GM12878 (cell line): ENCODE measurements at regions of chr2 and their contacts with region 1.

Region 1: DNA sequence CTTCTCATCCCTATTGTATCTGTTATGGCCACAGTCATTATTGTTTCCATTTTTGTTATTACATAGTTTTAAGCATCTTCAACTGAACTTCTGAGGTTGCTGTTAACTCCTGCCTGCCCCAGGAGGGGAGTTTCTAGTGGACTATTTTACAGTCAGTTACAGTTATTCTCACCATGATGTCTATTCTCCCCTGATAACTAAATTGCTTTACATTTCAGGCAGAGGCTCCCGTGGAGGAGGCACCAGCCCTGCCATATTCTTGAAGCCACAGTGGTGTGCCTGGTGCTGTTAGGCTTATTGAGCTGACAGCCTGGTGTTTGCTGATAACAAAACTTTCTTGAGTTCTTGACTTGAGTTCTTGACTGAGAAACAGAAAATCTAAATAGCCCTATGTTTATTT is 256.4 kb downstream of the TFCP2L1 start:
- DNase-seq: no peak
- ATAC-seq: no peak
- H3K4me3 ChIP-seq: no peak overlapping the region
- H3K27ac ChIP-seq: no peak overlapping the region
- H3K4me1 ChIP-seq: no peaks in the 10 kb centered on the region
- H3K27me3 ChIP-seq: peaks cover 0 to 3% of the 10 kb centered on the region in 2 experiments; a peak in 2 of 4 replicates
- CTCF ChIP-seq: no peak
- EP300 ChIP-seq: no peak
- POLR2A ChIP-seq: no peak
- RAD21 ChIP-seq: no peak

Region 2: DNA sequence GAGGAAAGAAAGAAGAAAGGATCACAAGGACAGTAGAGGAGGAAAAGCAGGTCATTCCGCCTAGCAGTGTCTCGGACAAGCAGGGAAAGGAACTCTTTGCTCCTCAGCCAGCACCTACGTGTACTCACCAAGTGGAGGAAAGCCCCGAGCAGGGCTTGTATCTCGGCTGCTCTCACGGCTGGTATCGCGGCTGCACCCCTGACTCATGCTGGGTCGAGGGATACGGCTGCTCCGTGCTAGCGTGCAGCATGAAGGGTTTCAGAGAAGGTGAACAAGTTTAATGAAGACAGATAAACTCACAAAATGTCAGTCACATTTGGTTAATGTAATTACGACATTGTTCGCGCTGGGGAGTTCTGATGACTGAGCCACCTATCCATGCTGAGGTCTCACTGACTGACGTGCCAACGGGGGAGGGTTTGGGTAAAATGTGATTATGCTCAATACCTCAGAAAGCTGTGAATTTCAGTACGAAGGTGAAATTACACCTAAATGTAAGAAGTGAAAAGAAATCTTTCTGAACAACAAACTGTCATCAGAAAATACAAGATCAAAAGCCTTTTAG is 390.0 kb after region 1 on chr2:
- CTCF ChIA-PET with region 1: no interaction called
- POLR2A ChIA-PET with region 1: no interaction called
- RAD21 ChIA-PET with region 1: no interaction called
- SMC1A ChIA-PET with region 1: no interaction called
- in situ Hi-C with region 1: no loop called
- intact Hi-C with region 1: no loop called
- DNase-seq: no peak
- ATAC-seq: no peak
- H3K4me3 ChIP-seq: no peak overlapping the region
- H3K27ac ChIP-seq: no peak overlapping the region
- H3K4me1 ChIP-seq: no peaks in the 10 kb centered on the region
- H3K27me3 ChIP-seq: no peaks in the 10 kb centered on the region
- CTCF ChIP-seq: no peak
- EP300 ChIP-seq: no peak
- POLR2A ChIP-seq: no peak
- RAD21 ChIP-seq: no peak

Region 3: GRCh38 chr2:121519732-121520640 is 491.4 kb after region 1 on chr2:
- CTCF ChIA-PET with region 1: no interaction called
- POLR2A ChIA-PET with region 1: interaction called, 10 read pairs
- RAD21 ChIA-PET with region 1: no interaction called
- SMC1A ChIA-PET with region 1: no interaction called
- in situ Hi-C with region 1: no loop called
- intact Hi-C with region 1: no loop called
- DNase-seq: no peak
- ATAC-seq: peak; percentile 52
- H3K4me3 ChIP-seq: no peak overlapping the region
- H3K27ac ChIP-seq: no peak overlapping the region
- H3K4me1 ChIP-seq: no peaks in the 10 kb centered on the region
- H3K27me3 ChIP-seq: no peaks in the 10 kb centered on the region
- CTCF ChIP-seq: no peak
- EP300 ChIP-seq: no peak
- POLR2A ChIP-seq: no peak
- RAD21 ChIP-seq: no peak